ENCODE measurements at regions of chr3 and their contacts with region 1.

Region 1: DNA sequence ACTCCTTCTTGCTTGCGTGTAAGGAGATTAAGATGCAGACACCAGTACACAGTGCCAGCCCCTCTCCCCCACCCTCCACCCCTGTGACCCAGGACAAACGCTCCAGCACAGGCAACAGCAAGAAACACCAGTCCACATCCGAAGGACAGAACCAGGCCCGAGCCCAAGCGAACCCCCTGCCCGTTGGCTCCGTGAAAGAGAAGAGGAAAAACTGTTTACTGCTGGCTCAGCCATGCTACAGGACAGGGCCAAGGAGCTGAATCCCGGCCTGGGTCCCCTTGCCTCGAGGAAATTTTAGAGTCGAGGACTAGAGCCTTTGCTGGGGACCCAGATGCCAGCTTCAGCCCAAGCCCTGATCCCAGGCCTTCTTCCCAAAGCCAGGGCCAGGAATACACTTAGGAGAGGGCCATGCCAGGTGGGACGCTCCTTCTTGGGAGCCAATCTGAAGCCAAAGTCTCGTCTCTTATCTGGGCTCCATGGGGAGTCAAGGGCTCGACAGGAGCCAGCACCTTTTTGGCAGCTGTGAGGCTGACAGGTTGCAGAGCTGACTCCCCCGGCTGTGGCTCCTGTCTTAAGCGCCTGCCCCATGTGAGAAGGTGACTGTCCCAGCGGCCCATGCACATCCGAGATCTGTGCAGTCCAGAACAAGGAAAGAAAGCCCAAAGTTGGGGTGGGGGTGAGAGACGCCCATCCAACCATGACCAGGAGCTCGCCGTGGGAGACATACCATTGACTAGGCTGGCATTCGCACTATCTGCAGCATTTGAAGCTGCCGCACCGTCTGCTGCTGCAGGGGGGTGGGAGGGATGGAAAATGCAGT is 63.8 kb upstream of the SEC13 start:
- DNase-seq: no peak
- H3K27ac ChIP-seq: no peak overlapping the region
- CTCF ChIP-seq: no peak

Region 2: DNA sequence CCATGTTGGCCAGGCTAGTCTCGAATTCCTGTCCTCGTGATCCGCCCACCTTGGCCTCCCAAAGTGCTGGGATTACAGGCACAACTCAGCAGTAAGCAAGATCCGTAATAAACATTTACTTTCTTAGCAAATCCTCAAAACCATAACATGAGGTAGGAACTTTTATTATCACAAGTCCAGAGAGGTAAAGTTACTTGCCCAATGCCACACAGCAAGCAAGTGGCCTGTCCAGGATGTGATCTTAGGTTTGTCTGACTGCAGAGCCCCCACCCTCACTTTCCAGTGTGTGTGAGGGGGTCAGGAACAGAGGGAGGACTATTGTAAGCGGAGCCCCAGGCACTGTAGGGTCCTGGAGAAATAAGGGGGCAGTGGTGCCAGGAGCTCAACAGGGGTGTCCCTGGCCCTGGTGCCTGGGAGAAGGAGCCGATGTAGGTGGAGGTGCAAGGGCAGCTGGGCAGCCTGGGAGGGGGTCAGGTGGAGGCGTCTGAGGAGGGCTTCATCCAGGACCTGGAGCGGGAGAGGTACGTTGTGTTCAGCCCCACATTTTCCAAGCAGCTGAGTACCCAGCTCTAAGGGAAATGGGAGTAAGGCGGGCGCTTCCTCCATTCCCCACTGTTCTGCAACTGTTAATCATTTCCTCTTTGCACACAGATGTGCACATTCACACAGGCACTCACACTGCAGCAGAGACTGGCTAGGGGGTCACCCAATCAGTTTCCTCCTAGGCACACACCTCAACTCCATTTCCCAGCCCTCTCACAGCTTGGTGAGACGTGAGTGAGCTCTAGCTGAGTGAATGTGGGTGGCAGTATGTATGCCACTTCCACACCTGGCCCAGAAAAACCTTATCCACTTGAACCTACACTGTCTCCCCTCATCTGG is 546.8 kb before region 1 on chr3:
- CTCF ChIA-PET with region 1: interaction called, 11 read pairs
- POLR2A ChIA-PET with region 1: no interaction called
- DNase-seq: no peak
- H3K27ac ChIP-seq: peak overlapping the region; percentile 11; the same call in 1 of the 2 replicates
- CTCF ChIP-seq: no peak

Region 3: DNA sequence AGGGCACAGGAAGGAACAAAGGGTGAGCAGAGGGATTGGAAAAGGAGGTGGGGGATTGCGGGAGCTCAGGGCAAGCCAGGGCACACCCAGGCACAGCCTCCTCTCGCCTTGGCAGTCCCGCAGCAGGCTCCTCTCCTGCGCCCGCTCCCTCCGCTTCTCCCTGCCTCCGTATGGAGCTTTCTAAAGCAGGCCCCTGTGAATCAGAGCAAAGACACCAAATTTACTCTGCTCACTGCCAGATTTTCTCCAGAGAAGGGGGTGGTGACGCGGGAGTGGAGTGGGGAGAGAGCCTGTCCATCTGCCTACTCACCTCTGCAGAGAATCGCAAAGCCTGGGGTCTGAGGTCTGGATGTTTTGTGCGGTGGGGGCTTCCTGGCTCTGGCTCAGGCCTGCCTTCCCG is 100.6 kb after region 1 on chr3:
- CTCF ChIA-PET with region 1: no interaction called
- POLR2A ChIA-PET with region 1: no interaction called
- DNase-seq: no peak
- H3K27ac ChIP-seq: no peak overlapping the region
- CTCF ChIP-seq: no peak